ENCODE measurements at regions of chr6 and their contacts with region 1.

Region 1: GRCh38 chr6:39377539-39377950 is 55.0 kb upstream of the KCNK16 start:
- DNase-seq: peak; percentile 59 to 67
- H3K4me3 ChIP-seq: no peak overlapping the region
- H3K4me3 Mint-ChIP-seq: no peak overlapping the region
- H3K27ac Mint-ChIP-seq: no peak overlapping the region
- H3K4me1 ChIP-seq: no peaks in the 10 kb centered on the region
- H3K4me1 Mint-ChIP-seq: no peaks in the 10 kb centered on the region
- H3K27me3 ChIP-seq: no peaks in the 10 kb centered on the region; the same call in 1 of the 2 replicates
- H3K27me3 Mint-ChIP-seq: peaks cover 12% of the 10 kb centered on the region
- CTCF ChIP-seq: peak; percentile 45 to 76

Region 2: DNA sequence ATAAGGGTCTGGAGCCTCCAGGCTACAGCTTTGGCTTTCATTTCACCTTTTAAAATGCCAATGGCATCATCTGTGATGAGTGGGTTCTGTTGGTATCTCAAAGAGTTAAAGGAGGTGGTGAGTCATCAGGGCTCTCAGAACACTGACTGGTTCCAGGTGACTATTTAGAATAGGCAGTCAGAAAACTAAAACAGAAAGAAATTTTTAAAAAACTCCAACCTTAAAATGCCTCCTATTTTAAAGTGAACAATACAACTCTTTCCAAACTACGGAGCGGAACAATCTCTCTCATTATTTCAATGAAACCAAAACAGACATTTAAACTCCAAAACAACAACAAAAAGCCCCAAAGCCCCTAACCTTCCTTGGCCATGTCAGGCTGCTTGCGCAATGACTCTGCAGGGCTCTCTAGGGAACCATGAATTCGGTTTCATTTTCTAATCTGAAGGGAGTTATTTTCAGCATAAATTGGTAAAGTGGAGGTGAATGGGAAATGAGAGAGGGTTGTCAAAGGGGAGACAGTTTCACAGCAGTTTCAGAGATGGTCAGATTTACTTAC is 152.7 kb after region 1 on chr6:
- CTCF ChIA-PET with region 1: no interaction called
- POLR2A ChIA-PET with region 1: no interaction called
- intact Hi-C with region 1: no loop called
- DNase-seq: no peak
- H3K4me3 ChIP-seq: no peak overlapping the region
- H3K4me3 Mint-ChIP-seq: no peak overlapping the region
- H3K27ac Mint-ChIP-seq: no peak overlapping the region
- H3K4me1 ChIP-seq: no peaks in the 10 kb centered on the region
- H3K4me1 Mint-ChIP-seq: no peaks in the 10 kb centered on the region
- H3K27me3 ChIP-seq: no peaks in the 10 kb centered on the region
- H3K27me3 Mint-ChIP-seq: peaks cover 16% of the 10 kb centered on the region
- CTCF ChIP-seq: no peak

Region 3: GRCh38 chr6:39568896-39569295 is 191.4 kb after region 1 on chr6:
- CTCF ChIA-PET with region 1: no interaction called
- POLR2A ChIA-PET with region 1: no interaction called
- intact Hi-C with region 1: loop called (anchors 10 kb)
- DNase-seq: no peak
- H3K4me3 ChIP-seq: no peak overlapping the region
- H3K4me3 Mint-ChIP-seq: no peak overlapping the region
- H3K27ac Mint-ChIP-seq: no peak overlapping the region
- H3K4me1 ChIP-seq: no peaks in the 10 kb centered on the region
- H3K4me1 Mint-ChIP-seq: no peaks in the 10 kb centered on the region
- H3K27me3 ChIP-seq: no peaks in the 10 kb centered on the region
- H3K27me3 Mint-ChIP-seq: peaks cover 11% of the 10 kb centered on the region
- CTCF ChIP-seq: no peak

Region 4: GRCh38 chr6:39724787-39725631 is 347.5 kb after region 1 on chr6 and contains the start of gene KIF6:
- CTCF ChIA-PET with region 1: no interaction called
- POLR2A ChIA-PET with region 1: no interaction called
- intact Hi-C with region 1: loop called (anchors 10 kb)
- DNase-seq: peak; percentile 89 to 93
- H3K4me3 ChIP-seq: peak within 1 kb of the TSS; percentile 84
- H3K4me3 Mint-ChIP-seq: peak within 1 kb of the TSS; percentile 95
- H3K27ac Mint-ChIP-seq: peak within 1 kb of the TSS; percentile 93
- H3K4me1 ChIP-seq: no peaks in the 10 kb centered on the region
- H3K4me1 Mint-ChIP-seq: no peaks in the 10 kb centered on the region
- H3K27me3 ChIP-seq: no peaks in the 10 kb centered on the region
- H3K27me3 Mint-ChIP-seq: peaks cover 6% of the 10 kb centered on the region
- CTCF ChIP-seq: no peak
- total RNA-seq, gene KIF6: not detected in 2 replicates

Region 5: DNA sequence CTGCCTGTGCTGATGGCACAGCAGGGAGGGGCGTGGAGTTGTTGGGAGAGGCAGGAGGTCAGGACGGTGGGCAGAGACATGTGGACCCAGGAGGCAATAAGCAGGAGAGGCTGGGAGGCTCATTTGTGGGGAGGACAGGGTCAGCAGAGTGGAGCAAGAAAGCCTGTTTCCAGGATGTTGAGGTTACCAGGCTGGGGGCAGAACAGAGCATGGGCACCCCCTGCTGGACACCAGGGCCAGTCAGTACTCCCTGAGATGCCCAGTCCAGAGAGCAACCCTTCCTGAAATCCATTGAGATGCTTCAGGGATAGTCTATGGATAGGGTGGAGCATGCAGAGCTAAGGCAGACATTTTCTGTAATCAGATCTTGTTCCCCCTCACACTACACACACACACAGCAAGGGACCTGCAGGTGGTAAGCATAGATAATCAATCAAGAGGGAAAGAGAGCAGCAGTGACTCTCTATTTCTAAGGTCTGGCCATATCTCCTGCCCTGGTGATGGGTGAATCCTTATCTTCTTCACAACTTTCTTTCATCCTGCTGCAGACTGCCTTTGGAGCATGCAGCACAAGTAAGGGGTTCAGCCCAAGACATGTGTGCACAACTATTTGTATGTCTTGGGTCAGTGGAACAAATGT is 515.1 kb after region 1 on chr6:
- CTCF ChIA-PET with region 1: no interaction called
- POLR2A ChIA-PET with region 1: no interaction called
- intact Hi-C with region 1: loop called (anchors 1 kb)
- DNase-seq: peak; percentile 52 to 64
- H3K4me3 ChIP-seq: no peak overlapping the region
- H3K4me3 Mint-ChIP-seq: no peak overlapping the region
- H3K27ac Mint-ChIP-seq: no peak overlapping the region
- H3K4me1 ChIP-seq: peaks cover 7% of the 10 kb centered on the region; the same call in 1 of the 2 replicates
- H3K4me1 Mint-ChIP-seq: no peaks in the 10 kb centered on the region
- H3K27me3 ChIP-seq: no peaks in the 10 kb centered on the region
- H3K27me3 Mint-ChIP-seq: no peaks in the 10 kb centered on the region
- CTCF ChIP-seq: peak; percentile 52 to 84

Region 6: DNA sequence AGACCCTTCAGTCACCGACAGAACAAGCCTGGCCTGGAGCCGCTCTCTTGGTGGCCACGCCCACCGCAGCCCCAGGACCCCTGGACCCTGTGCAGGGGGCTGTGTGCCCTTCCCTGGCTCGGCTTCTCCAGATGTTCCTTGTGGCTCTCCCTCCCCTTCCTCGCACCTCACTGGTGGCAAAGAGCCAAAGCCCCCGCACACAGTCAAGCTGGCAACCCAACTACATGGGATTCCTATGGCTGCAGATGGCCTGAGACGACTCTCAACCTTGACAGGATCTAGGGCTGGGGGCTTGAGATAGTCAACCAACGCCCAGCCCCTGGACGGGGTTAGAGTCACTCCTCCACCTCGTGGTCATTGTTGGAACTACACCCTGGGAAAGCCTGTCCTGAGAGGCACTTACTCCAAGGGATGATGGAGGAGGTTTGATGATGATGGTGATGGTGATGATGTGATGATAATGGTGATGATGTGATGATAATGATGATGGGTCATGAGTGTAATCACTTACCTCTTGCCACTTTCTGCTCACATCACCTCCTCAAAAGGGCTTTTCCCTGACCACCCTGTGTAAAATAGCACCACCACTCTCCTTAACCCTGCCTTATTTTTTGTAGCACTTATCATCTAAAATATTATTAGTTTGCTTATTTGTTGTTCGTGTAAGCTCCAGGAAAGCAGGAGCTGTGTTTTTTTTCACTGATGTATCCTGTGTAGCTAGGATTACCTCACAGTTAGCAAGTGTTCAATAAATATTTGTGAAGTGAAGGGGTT is 931.2 kb after region 1 on chr6:
- CTCF ChIA-PET with region 1: no interaction called
- POLR2A ChIA-PET with region 1: no interaction called
- intact Hi-C with region 1: loop called (anchors 1 kb)
- DNase-seq: peak; percentile 65 to 80
- H3K4me3 ChIP-seq: no peak overlapping the region
- H3K4me3 Mint-ChIP-seq: no peak overlapping the region
- H3K27ac Mint-ChIP-seq: no peak overlapping the region
- H3K4me1 ChIP-seq: no peaks in the 10 kb centered on the region
- H3K4me1 Mint-ChIP-seq: no peaks in the 10 kb centered on the region
- H3K27me3 ChIP-seq: no peaks in the 10 kb centered on the region; the same call in 1 of the 2 replicates
- H3K27me3 Mint-ChIP-seq: peaks cover 25% of the 10 kb centered on the region
- CTCF ChIP-seq: peak; percentile 83 to 88